Activated CD4-positive, alpha-beta T cell treated with anti-CD3 and anti-CD28 coated beads, Interleukin-2, amount 10 ng/mL, durations not matched to agents 24 days and 14 days (primary cell): ENCODE measurements at regions of chr9 and their contacts with region 1.

Region 1: DNA sequence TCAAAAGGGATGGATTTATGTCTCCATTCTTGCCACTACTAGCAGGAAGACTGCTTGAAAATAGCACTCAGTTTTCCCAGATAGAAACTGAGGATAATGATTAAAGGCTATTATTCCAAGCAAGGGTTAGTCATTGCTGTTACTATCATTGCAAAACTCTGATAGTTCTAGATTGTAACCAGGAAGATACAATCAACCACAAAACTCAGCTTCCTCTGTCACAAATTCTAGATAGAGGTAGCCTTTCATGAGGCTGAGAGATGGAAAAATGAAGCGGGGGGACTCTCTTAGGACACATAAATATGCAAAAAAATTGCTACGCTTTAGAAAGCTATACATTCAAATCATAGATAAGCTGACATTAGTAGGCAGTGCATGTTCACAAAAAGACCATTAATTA is 3.1 kb downstream of the ANXA1 start:
- DNase-seq: peak; percentile 79
- H3K4me3 Mint-ChIP-seq: peak overlapping the region; percentile 83
- H3K27ac Mint-ChIP-seq: peak overlapping the region; percentile 86
- H3K4me1 Mint-ChIP-seq: peaks cover 61% of the 10 kb centered on the region
- H3K27me3 Mint-ChIP-seq: no peaks in the 10 kb centered on the region

Region 2: DNA sequence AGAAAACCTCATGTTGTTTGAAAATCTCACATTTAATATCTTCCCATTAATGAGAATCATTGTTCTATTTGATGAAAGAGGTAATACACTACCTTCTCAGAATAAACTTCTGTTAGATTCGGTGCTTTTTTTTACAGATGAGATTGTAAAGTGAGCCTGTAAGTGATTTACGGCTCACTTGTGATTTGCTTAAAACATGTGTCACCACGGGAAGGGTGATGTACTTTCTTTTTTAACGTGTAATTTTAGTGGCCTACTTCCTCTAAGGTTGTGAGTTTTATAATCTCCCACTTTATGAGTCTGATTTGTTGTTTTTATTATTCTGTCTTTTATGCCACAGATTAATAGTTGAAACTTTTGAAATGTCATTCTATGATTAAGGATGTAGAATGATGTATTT is 12.9 kb after region 1 on chr9:
- intact Hi-C with region 1: loop called (anchors 1 kb)
- DNase-seq: no peak
- H3K4me3 Mint-ChIP-seq: peak overlapping the region; percentile 15
- H3K27ac Mint-ChIP-seq: peak overlapping the region; percentile 29
- H3K4me1 Mint-ChIP-seq: peaks cover 11% of the 10 kb centered on the region
- H3K27me3 Mint-ChIP-seq: no peaks in the 10 kb centered on the region